Dorsolateral prefrontal cortex (tissue), 120 donors: ENCODE measurements at regions of chr7 and their contacts with region 1.

Region 1: DNA sequence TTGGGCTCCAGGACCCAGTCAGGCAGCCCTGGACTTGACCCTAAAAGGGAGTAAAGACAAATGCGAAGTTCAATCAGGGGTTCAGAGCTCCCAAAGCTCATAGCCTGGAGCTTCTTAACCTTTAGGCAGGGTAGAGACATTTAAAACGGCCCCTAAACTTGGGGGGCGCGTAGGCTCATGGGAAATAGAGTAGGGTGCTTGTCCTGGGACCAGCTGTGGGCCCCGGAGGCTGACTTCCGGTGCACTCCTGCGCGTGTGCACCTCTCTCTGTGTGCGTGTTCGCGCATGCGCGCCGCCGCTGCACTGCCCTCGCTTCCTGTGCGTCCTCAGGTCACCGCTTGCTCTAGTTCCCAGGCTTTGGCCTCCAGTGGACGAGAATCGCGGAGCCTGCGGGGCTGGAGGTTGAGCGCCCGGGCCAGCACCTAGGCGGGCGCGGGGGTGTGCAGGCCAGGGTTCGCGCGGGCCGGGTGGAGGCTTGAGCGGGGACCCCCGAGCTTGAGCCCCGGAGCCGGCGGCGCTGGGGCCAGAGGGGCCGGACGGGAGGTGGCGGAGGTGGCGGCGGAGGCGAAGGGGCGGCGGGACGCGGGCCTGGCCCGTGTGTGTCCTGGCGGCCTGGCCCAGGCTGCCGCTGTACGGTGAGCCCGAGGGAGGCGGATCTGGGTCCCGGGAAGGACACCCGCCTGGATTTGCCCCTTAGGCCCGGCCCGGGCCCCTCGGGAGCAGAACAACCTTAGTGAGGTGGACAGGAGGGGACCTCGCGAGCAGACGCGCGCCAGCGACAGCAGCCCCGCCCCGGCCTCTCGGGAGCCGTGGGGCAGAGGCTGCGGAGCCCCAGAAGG is at the start of gene RBAK:
- DNase-seq: peak; percentile 86 to 95 (median 91)
- H3K4me3 ChIP-seq: peak within 1 kb of the TSS; percentile 77 to 99 (median 90)
- H3K27ac ChIP-seq: peak within 1 kb of the TSS in 55 of 59 donors; percentile 18 to 89 (median 72)
- H3K27me3 ChIP-seq: no peaks in the 10 kb centered on the region
- CTCF ChIP-seq: peak in 25 of 56 donors; percentile 7 to 58 (median 25)
- total RNA-seq, gene RBAK: 10.1 to 21.3 (median 14.9) TPM

Region 2: GRCh38 chr7:4775250-4775847 is 270.4 kb before region 1 on chr7 and contains the start of gene AP5Z1:
- intact Hi-C with region 1: loop called in 1 of 2 experiments (anchors 5 kb)
- DNase-seq: peak; percentile 96 to 99 (median 98)
- H3K4me3 ChIP-seq: peak within 1 kb of the TSS; percentile 73 to 100 (median 93)
- H3K27ac ChIP-seq: peak within 1 kb of the TSS; percentile 51 to 97 (median 91)
- H3K27me3 ChIP-seq: no peaks in the 10 kb centered on the region
- CTCF ChIP-seq: peak in 19 of 56 donors; percentile 10 to 51 (median 19)
- total RNA-seq, gene AP5Z1: 24.1 to 55.6 (median 34.6) TPM

Region 3: DNA sequence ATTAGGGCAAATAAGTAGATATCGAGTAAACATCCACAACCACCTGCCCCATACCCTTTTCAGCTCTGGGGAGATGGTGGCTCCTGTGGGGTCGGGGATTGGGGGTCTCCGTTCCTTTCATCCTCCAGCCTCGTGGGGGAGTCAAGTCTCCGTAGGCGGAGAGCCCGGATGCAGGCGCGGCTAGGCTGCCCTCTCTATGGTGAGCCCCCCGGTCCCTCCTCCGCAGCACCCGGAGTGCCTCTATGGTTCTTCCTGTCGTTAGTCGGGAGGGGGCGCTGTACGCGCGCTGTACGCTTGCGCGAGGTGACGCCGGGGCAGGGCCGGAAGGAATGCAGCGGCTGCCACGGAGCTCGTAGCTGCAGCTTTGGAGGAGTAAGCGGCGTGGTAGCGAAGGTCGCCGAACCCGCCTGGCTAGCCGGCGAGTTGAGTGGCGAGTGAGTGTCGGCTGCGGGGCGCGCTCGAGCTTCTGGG is 72.0 kb before region 1 on chr7:
- intact Hi-C with region 1: loop called in 1 of 2 experiments (anchors 2 kb)
- DNase-seq: peak; percentile 77 to 95 (median 88)
- H3K4me3 ChIP-seq: peak overlapping the region; percentile 55 to 94 (median 79)
- H3K27ac ChIP-seq: peak overlapping the region; percentile 23 to 92 (median 81)
- H3K27me3 ChIP-seq: no peaks in the 10 kb centered on the region
- CTCF ChIP-seq: peak; percentile 53 to 92 (median 81)

Region 4: DNA sequence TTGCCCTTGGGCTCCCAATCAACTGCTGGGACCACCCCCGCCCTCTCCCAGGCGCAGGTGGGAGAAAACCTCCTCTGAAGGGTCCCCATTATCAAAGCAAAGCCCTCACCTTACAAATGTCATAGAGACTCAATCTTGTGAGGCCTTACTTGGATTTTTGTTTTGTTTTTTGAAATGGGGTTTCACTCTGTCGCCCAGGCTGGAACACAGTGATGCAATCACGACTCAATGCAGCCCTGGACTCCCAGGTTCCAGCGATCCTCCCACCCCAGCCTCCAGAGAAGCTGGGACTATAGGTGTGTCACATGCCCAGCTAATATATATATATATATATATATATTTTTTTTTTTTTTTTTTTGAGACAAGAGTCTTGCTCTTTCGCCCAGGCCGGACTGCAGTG is 86.8 kb after region 1 on chr7:
- intact Hi-C with region 1: no loop called
- DNase-seq: no peak
- H3K4me3 ChIP-seq: no peak overlapping the region
- H3K27ac ChIP-seq: no peak overlapping the region
- H3K27me3 ChIP-seq: no peaks in the 10 kb centered on the region
- CTCF ChIP-seq: no peak